CD4-positive, alpha-beta T cell (primary cell): ENCODE measurements at regions of chr21 and their contacts with region 1.

Region 1: DNA sequence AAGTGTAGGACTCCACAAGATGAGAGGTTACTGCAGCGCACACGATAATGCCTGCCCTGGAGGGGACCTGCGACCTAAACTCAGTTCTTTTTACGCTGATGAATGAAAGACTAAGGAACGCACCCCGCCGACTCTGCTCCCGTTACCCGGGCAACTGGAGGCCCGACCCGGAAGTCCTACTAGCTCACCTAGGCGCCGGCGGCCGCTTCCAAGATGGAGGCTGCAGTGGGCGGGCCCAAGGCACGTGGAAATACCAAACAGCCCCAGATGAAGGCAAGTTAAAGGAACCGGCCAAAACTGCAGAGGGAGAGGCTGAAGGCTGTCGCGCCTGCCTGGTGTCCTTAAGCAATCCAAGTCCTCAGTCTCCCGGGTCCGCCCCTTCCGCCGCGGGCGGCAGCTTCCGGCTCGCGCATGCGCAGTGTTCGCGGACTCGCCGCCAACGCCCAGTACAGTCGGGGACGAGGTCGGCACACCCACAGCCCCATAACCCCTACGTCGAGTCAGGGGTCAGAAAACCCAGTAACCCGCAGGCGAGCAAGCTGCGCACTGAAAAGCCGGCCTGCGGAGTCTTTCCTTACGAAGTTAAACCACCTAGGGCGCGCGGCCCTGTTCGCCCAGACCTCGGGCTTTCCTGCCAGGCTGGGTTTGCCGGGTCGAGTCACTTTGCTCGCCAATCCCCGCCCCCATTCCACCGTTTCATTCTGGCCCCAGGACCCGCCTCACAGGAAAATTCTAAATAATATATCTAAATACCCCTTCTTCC is at the start of gene SETD4:
- DNase-seq: peak; percentile 85 to 96 (median 91)
- ATAC-seq: peak; percentile 86
- H3K4me3 ChIP-seq: peak within 1 kb of the TSS; percentile 85
- H3K4me3 Mint-ChIP-seq: peak within 1 kb of the TSS; percentile 96
- H3K27ac ChIP-seq: peak within 1 kb of the TSS; percentile 89 to 93
- H3K27ac Mint-ChIP-seq: peak within 1 kb of the TSS; percentile 97
- H3K4me1 ChIP-seq: peaks cover 20% of the 10 kb centered on the region
- H3K4me1 Mint-ChIP-seq: peaks cover 21% of the 10 kb centered on the region
- H3K27me3 ChIP-seq: no peaks in the 10 kb centered on the region
- H3K27me3 Mint-ChIP-seq: no peaks in the 10 kb centered on the region
- CTCF ChIP-seq: no peak
- total RNA-seq, gene SETD4: 10.8 to 12.3 TPM

Region 2: DNA sequence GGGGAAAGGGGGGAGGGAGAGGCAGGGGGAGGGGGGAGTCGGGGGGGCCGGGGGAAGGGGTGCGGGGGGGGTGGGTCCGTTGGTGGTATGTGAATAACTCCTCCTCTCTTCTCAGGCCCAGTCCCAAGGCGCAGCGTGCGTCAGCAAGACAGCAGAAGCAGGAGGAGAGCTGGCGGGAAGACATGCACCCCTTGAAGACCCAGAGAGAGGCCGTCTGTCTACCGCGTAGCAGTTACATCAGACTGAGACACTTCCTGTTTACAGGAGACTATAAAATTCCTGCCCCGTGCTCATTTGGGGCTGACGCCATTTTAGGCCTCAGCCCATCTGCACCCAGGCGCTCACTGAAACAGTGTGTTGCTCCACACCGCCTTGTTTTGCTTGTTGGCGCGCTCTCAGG is 55.3 kb before region 1 on chr21:
- CTCF ChIA-PET with region 1: no interaction called
- POLR2A ChIA-PET with region 1: no interaction called
- intact Hi-C with region 1: no loop called
- DNase-seq: no peak
- ATAC-seq: no peak
- H3K4me3 ChIP-seq: no peak overlapping the region
- H3K4me3 Mint-ChIP-seq: no peak overlapping the region
- H3K27ac ChIP-seq: no peak overlapping the region
- H3K27ac Mint-ChIP-seq: no peak overlapping the region
- H3K4me1 ChIP-seq: no peaks in the 10 kb centered on the region
- H3K4me1 Mint-ChIP-seq: no peaks in the 10 kb centered on the region
- H3K27me3 ChIP-seq: peaks cover 4 to 8% of the 10 kb centered on the region in 2 experiments
- H3K27me3 Mint-ChIP-seq: peaks cover 50% of the 10 kb centered on the region
- CTCF ChIP-seq: no peak

Region 3: DNA sequence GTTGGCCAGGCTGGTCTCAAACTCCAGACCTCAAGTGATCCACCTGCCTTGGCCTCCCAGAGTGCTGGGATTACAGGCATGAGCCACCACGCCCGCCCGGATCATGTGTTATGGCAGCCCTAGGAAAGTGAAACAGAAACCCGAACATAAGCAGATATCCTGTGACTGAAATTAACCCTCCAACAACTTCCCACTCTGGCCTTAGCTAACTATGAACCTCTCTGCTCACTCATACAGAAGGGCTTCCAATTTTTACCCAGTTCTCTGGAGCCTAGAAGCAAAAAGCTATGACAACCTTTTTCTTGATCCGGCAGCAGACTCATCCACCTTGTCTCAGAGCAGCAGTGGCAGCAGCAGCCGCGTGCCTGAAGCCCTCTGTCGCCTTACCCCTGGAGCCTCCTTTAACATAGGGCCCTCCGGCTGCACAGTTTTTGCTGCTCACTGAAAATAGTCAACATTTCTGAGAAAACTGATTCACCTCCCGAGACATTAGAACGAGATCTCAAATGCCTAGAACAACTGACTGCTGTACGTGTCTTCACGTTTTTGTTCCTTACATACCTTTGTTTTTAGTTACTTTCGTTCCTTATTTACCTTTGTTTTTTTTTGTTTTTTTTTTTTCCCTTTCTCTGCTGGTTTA is 18.8 kb after region 1 on chr21:
- CTCF ChIA-PET with region 1: no interaction called
- POLR2A ChIA-PET with region 1: interaction called, 22 read pairs
- intact Hi-C with region 1: loop called in 1 of 2 experiments (anchors 1 kb)
- DNase-seq: peak; percentile 3 to 72 (median 22)
- ATAC-seq: peak; percentile 93
- H3K4me3 ChIP-seq: peak overlapping the region; percentile 46
- H3K4me3 Mint-ChIP-seq: peak overlapping the region; percentile 85
- H3K27ac ChIP-seq: peak overlapping the region in 1 of 2 donors; percentile 80
- H3K27ac Mint-ChIP-seq: peak overlapping the region; percentile 89
- H3K4me1 ChIP-seq: peaks cover 18% of the 10 kb centered on the region
- H3K4me1 Mint-ChIP-seq: peaks cover 34% of the 10 kb centered on the region
- H3K27me3 ChIP-seq: no peaks in the 10 kb centered on the region
- H3K27me3 Mint-ChIP-seq: no peaks in the 10 kb centered on the region
- CTCF ChIP-seq: no peak

Region 4: GRCh38 chr21:36113647-36114428 is 53.5 kb after region 1 on chr21:
- CTCF ChIA-PET with region 1: interaction called, 7 read pairs
- POLR2A ChIA-PET with region 1: interaction called, 13 read pairs
- intact Hi-C with region 1: loop called (anchors 1 to 2 kb)
- DNase-seq: peak in 12 of 14 experiments; percentile 18 to 92 (median 48)
- ATAC-seq: peak; percentile 81
- H3K4me3 ChIP-seq: peak overlapping the region; percentile 56
- H3K4me3 Mint-ChIP-seq: peak overlapping the region; percentile 84
- H3K27ac ChIP-seq: peak overlapping the region; percentile 58 to 79
- H3K27ac Mint-ChIP-seq: peak overlapping the region; percentile 61
- H3K4me1 ChIP-seq: peaks cover 32% of the 10 kb centered on the region
- H3K4me1 Mint-ChIP-seq: peaks cover 27% of the 10 kb centered on the region
- H3K27me3 ChIP-seq: no peaks in the 10 kb centered on the region
- H3K27me3 Mint-ChIP-seq: no peaks in the 10 kb centered on the region
- CTCF ChIP-seq: no peak

Region 5: DNA sequence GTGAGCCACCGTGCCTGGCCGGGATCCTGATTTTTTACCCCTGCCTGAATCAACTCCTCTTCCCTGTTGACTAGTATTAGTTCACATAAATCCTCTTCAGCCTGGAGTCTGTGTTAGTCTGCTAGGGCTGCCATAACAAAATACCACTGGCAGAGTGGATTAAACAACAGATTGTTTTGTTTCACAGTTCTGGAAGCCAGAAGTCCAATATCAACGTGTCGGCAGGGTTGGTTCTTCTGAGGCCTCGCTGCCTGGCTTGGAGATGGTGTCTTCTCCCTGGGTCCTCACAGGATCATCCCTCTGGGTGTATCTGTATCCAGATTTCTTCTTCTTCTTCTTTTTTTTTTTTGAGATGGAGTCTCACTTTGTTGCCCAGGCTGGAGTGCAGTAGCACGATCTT is 114.4 kb after region 1 on chr21:
- CTCF ChIA-PET with region 1: interaction called, 3 read pairs
- POLR2A ChIA-PET with region 1: interaction called, 11 read pairs
- intact Hi-C with region 1: no loop called
- DNase-seq: no peak
- ATAC-seq: no peak
- H3K4me3 ChIP-seq: no peak overlapping the region
- H3K4me3 Mint-ChIP-seq: no peak overlapping the region
- H3K27ac ChIP-seq: no peak overlapping the region
- H3K27ac Mint-ChIP-seq: peak overlapping the region; percentile 91
- H3K4me1 ChIP-seq: peaks cover 28% of the 10 kb centered on the region
- H3K4me1 Mint-ChIP-seq: peaks cover 33% of the 10 kb centered on the region
- H3K27me3 ChIP-seq: no peaks in the 10 kb centered on the region
- H3K27me3 Mint-ChIP-seq: no peaks in the 10 kb centered on the region
- CTCF ChIP-seq: no peak

Region 6: GRCh38 chr21:36385233-36386030 is 325.1 kb after region 1 on chr21 and contains the start of gene CHAF1B:
- CTCF ChIA-PET with region 1: no interaction called
- POLR2A ChIA-PET with region 1: no interaction called
- intact Hi-C with region 1: loop called in 1 of 2 experiments (anchors 5 kb)
- DNase-seq: peak; percentile 65 to 90 (median 78)
- ATAC-seq: peak; percentile 98
- H3K4me3 ChIP-seq: peak within 1 kb of the TSS; percentile 65
- H3K4me3 Mint-ChIP-seq: peak within 1 kb of the TSS; percentile 91
- H3K27ac ChIP-seq: no peak within 1 kb of the TSS
- H3K27ac Mint-ChIP-seq: peak within 1 kb of the TSS; percentile 10
- H3K4me1 ChIP-seq: peaks cover 13% of the 10 kb centered on the region
- H3K4me1 Mint-ChIP-seq: no peaks in the 10 kb centered on the region
- H3K27me3 ChIP-seq: no peaks in the 10 kb centered on the region
- H3K27me3 Mint-ChIP-seq: no peaks in the 10 kb centered on the region
- CTCF ChIP-seq: no peak
- total RNA-seq, gene CHAF1B: 4.5 to 4.8 TPM